ENCODE measurements at regions of chr3 and their contacts with region 1.

Region 1: DNA sequence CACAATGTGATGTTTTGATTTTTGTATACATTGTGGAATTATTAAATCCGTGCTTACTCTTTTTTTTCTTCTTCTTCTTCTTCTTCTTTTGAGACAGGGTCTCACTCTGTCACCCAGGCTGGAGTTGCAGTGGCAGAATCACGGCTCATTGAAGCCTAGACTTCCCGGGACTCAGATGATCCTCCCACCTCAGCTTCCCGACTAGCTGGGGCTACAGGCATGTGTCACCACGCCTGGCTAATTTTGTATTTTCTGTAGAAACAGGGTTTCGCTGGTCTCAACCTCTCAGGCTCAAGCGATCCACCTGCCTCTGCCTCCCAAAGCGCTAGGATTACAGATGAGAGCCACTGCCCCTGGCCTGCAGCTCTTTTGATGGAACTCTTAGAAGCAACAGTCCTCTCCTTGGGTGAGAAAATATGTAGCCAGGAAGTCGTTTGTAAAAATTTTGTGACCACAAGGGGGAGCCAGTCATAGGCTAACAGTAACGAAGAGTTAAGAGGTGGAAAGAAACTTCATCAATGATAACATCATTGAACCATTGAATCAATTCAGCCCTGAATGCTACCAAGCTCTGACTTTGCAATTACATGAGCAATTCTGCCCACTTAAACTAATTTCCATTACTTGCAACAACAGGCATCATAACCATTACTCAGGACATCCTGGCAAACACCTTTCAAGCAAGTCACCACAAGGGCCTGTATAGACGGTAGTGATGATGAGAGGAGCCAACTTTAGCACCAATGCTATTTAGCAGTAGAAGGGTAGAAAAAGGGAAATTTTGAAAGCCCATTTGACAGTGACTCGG is 16.7 kb upstream of the CMTM7 start:
- DNase-seq: peak; percentile 40 to 88 (median 66)
- ATAC-seq: peak; percentile 32
- H3K4me3 ChIP-seq: no peak overlapping the region
- H3K4me3 Mint-ChIP-seq: no peak overlapping the region
- H3K27ac ChIP-seq: no peak overlapping the region
- H3K27ac Mint-ChIP-seq: peak overlapping the region; percentile 18
- H3K4me1 ChIP-seq: peaks cover 31% of the 10 kb centered on the region
- H3K4me1 Mint-ChIP-seq: peaks cover 41% of the 10 kb centered on the region
- H3K27me3 ChIP-seq: no peaks in the 10 kb centered on the region
- H3K27me3 Mint-ChIP-seq: no peaks in the 10 kb centered on the region
- CTCF ChIP-seq: peak; percentile 78

Region 2: DNA sequence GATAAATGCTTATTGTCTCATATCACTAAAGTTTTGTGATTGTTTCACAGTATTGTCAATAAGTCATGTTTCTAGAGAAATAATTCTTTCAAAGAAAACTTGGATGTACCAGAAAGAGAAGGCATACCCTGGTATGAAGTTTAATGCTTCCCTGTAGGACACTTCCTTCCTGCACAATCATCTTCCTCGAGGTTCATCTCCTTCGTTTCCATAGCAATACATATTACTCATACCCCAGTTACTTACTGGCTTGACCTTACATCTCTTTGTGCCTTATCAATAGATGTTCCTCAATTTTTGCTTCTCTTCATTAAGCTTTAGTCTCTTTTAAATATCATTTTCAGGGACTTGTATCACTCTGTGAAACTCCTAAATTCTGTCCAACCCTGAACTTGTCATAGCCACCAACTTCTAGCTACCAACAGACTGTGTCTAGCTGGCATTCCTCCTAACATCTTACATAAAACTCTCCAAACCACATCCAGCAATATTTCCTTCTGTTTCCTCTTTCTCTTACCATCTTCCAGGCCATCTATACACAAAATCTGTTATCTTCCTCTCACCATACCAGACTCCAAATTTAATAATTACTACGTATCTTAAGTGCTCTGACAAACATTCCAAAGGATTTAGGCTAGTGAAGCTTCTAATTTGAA is 1614.8 kb before region 1 on chr3:
- CTCF ChIA-PET with region 1: no interaction called
- POLR2A ChIA-PET with region 1: no interaction called
- intact Hi-C with region 1: no loop called
- DNase-seq: no peak
- ATAC-seq: no peak
- H3K4me3 ChIP-seq: no peak overlapping the region
- H3K4me3 Mint-ChIP-seq: no peak overlapping the region
- H3K27ac ChIP-seq: no peak overlapping the region
- H3K27ac Mint-ChIP-seq: no peak overlapping the region
- H3K4me1 ChIP-seq: no peaks in the 10 kb centered on the region
- H3K4me1 Mint-ChIP-seq: no peaks in the 10 kb centered on the region
- H3K27me3 ChIP-seq: no peaks in the 10 kb centered on the region
- H3K27me3 Mint-ChIP-seq: no peaks in the 10 kb centered on the region
- CTCF ChIP-seq: no peak

Region 3: GRCh38 chr3:31981206-31982181 is 393.5 kb before region 1 on chr3 and contains the starts of genes OSBPL10 and ZNF860:
- CTCF ChIA-PET with region 1: no interaction called
- POLR2A ChIA-PET with region 1: no interaction called
- intact Hi-C with region 1: no loop called
- DNase-seq: peak in 3 of 9 experiments; percentile 6 to 19 (median 17)
- ATAC-seq: peak; percentile 49
- H3K4me3 ChIP-seq: peak within 1 kb of the TSS; percentile 39 to 66
- H3K4me3 Mint-ChIP-seq: peak within 1 kb of the TSS; percentile 84
- H3K27ac ChIP-seq: no peak within 1 kb of the TSS
- H3K27ac Mint-ChIP-seq: no peak within 1 kb of the TSS
- H3K4me1 ChIP-seq: peaks cover 15% of the 10 kb centered on the region
- H3K4me1 Mint-ChIP-seq: peaks cover 15% of the 10 kb centered on the region
- H3K27me3 ChIP-seq: peaks cover 10 to 16% of the 10 kb centered on the region in 2 experiments
- H3K27me3 Mint-ChIP-seq: peaks cover 51% of the 10 kb centered on the region
- CTCF ChIP-seq: no peak
- total RNA-seq, gene OSBPL10: 0.83 to 0.92 TPM
- total RNA-seq, gene ZNF860: not detected

Region 4: GRCh38 chr3:32177702-32178198 is 197.2 kb before region 1 on chr3:
- CTCF ChIA-PET with region 1: interaction called, 10 read pairs
- POLR2A ChIA-PET with region 1: no interaction called
- intact Hi-C with region 1: no loop called
- DNase-seq: peak in 8 of 9 experiments; percentile 19 to 58 (median 34)
- ATAC-seq: peak; percentile 59
- H3K4me3 ChIP-seq: no peak overlapping the region
- H3K4me3 Mint-ChIP-seq: peak overlapping the region; percentile 5
- H3K27ac ChIP-seq: no peak overlapping the region
- H3K27ac Mint-ChIP-seq: no peak overlapping the region
- H3K4me1 ChIP-seq: peaks cover 8% of the 10 kb centered on the region
- H3K4me1 Mint-ChIP-seq: peaks cover 10% of the 10 kb centered on the region
- H3K27me3 ChIP-seq: no peaks in the 10 kb centered on the region
- H3K27me3 Mint-ChIP-seq: peaks cover 4% of the 10 kb centered on the region
- CTCF ChIP-seq: no peak

Region 5: GRCh38 chr3:32334675-32335074 is 40.3 kb before region 1 on chr3:
- CTCF ChIA-PET with region 1: interaction called, 12 read pairs
- POLR2A ChIA-PET with region 1: no interaction called
- intact Hi-C with region 1: no loop called
- DNase-seq: peak in 8 of 9 experiments; percentile 29 to 66 (median 37)
- ATAC-seq: peak; percentile 81
- H3K4me3 ChIP-seq: no peak overlapping the region
- H3K4me3 Mint-ChIP-seq: no peak overlapping the region
- H3K27ac ChIP-seq: no peak overlapping the region
- H3K27ac Mint-ChIP-seq: peak overlapping the region; percentile 89
- H3K4me1 ChIP-seq: peaks cover 18% of the 10 kb centered on the region
- H3K4me1 Mint-ChIP-seq: peaks cover 28% of the 10 kb centered on the region
- H3K27me3 ChIP-seq: no peaks in the 10 kb centered on the region
- H3K27me3 Mint-ChIP-seq: no peaks in the 10 kb centered on the region
- CTCF ChIP-seq: no peak

Region 6: GRCh38 chr3:32359766-32360492 is 15.1 kb before region 1 on chr3:
- CTCF ChIA-PET with region 1: interaction called, 31 read pairs
- POLR2A ChIA-PET with region 1: interaction called, 3 read pairs
- intact Hi-C with region 1: no loop called
- DNase-seq: no peak
- ATAC-seq: no peak
- H3K4me3 ChIP-seq: no peak overlapping the region
- H3K4me3 Mint-ChIP-seq: no peak overlapping the region
- H3K27ac ChIP-seq: no peak overlapping the region
- H3K27ac Mint-ChIP-seq: no peak overlapping the region
- H3K4me1 ChIP-seq: no peaks in the 10 kb centered on the region
- H3K4me1 Mint-ChIP-seq: no peaks in the 10 kb centered on the region
- H3K27me3 ChIP-seq: no peaks in the 10 kb centered on the region
- H3K27me3 Mint-ChIP-seq: no peaks in the 10 kb centered on the region
- CTCF ChIP-seq: no peak

Region 7: GRCh38 chr3:32401556-32402081 is 26.6 kb after region 1 on chr3:
- CTCF ChIA-PET with region 1: interaction called, 33 read pairs
- POLR2A ChIA-PET with region 1: interaction called, 5 read pairs
- intact Hi-C with region 1: loop called (anchors 1 kb)
- DNase-seq: peak in 8 of 9 experiments; percentile 50 to 81 (median 70)
- ATAC-seq: peak; percentile 73
- H3K4me3 ChIP-seq: peak overlapping the region; percentile 53 to 66
- H3K4me3 Mint-ChIP-seq: peak overlapping the region; percentile 86
- H3K27ac ChIP-seq: peak overlapping the region; percentile 81 to 83
- H3K27ac Mint-ChIP-seq: peak overlapping the region; percentile 99
- H3K4me1 ChIP-seq: peaks cover 46% of the 10 kb centered on the region
- H3K4me1 Mint-ChIP-seq: peaks cover 78% of the 10 kb centered on the region
- H3K27me3 ChIP-seq: no peaks in the 10 kb centered on the region
- H3K27me3 Mint-ChIP-seq: no peaks in the 10 kb centered on the region
- CTCF ChIP-seq: no peak

Region 8: DNA sequence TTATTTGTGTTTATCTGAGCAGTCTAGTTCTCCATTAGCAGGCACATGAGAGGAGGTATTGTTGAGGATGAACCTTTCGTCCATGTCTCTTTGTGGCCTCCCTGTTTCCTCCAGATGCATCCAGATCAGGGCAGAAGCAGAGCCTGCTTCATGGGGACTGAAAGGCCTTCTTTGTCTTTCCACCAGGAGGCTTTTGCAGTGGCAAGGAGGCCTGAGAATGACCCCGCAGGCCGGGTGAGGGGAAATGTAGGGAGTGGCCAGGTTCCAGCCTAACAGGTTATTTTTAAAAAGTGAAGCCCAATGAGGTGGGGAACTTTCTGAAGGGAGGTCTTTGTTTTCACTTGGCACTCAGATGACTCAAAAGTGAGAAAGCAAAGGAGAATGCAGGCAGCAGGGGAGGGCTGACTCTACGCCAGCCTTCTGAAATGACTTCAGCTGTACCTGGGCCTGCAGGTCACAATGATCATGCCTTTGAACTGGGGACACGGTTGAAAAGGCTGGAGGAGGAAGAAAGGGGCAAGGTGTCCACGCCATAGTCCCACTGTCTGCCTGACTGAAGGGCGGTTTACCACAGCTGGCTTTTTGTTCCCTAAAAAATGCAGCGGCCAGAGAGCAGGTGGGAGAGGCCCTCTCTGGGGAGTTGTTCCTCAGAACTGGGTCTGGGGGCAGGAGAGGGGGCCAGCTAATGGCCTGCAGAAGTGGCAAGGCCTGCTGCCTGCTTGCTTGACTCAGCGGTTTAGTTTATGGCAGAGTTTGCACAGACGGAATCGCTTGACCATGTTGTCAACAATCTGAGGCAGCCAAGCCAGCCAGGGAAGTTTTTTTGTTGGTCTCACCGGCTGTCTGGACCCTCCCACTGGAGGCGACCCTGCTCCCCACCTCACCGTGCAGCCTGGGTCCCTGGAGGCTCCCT is 45.4 kb after region 1 on chr3:
- CTCF ChIA-PET with region 1: interaction called, 26 read pairs
- POLR2A ChIA-PET with region 1: interaction called, 6 read pairs
- intact Hi-C with region 1: no loop called
- DNase-seq: peak in 4 of 9 experiments; percentile 30 to 59 (median 49)
- ATAC-seq: peak; percentile 60
- H3K4me3 ChIP-seq: peak overlapping the region in 1 of 2 experiments; percentile 0
- H3K4me3 Mint-ChIP-seq: peak overlapping the region; percentile 73
- H3K27ac ChIP-seq: peak overlapping the region; percentile 15 to 54
- H3K27ac Mint-ChIP-seq: peak overlapping the region; percentile 98
- H3K4me1 ChIP-seq: peaks cover 91% of the 10 kb centered on the region
- H3K4me1 Mint-ChIP-seq: peaks cover 93% of the 10 kb centered on the region
- H3K27me3 ChIP-seq: no peaks in the 10 kb centered on the region
- H3K27me3 Mint-ChIP-seq: no peaks in the 10 kb centered on the region
- CTCF ChIP-seq: no peak

Region 9: DNA sequence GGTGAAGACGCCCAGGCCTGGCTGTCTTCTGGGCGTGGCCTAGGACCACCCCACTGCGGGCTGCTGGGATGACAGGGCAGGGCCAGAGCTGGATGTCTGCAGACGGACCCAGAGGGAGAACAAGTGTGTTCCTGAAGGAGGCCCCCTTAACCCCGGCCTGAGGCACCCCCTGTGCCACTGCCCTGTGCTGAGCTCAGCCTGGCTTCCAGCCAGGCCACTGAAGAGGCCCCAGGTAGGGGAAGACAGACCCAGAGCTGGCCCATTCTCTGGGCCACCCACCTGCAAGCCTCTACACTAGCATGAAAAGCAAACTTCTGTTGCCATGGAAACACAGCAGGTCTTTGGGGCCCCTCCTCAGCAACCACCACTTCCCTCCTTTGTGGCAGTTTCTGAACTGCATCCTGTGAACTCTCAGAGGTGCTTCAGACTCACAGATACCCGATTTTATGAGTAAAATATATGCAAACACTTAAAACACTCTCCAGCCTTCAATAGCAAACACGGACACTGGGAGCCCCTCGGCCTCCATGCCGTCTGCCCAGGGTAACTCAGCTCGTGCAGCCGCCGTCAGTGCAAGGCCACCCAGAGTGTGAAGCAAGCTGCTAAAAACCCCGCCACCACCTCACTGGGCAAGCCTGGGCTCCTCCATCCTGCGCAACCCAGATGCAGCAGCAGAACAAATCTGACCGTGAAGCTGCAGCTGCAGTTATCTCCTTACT is 85.2 kb after region 1 on chr3:
- CTCF ChIA-PET with region 1: interaction called, 22 read pairs
- POLR2A ChIA-PET with region 1: interaction called, 8 read pairs
- intact Hi-C with region 1: no loop called
- DNase-seq: peak; percentile 57 to 97 (median 80)
- ATAC-seq: peak; percentile 72
- H3K4me3 ChIP-seq: peak overlapping the region; percentile 34 to 37
- H3K4me3 Mint-ChIP-seq: peak overlapping the region; percentile 81
- H3K27ac ChIP-seq: peak overlapping the region; percentile 90 to 95
- H3K27ac Mint-ChIP-seq: no peak overlapping the region
- H3K4me1 ChIP-seq: peaks cover 79% of the 10 kb centered on the region
- H3K4me1 Mint-ChIP-seq: peaks cover 38% of the 10 kb centered on the region
- H3K27me3 ChIP-seq: no peaks in the 10 kb centered on the region
- H3K27me3 Mint-ChIP-seq: no peaks in the 10 kb centered on the region
- CTCF ChIP-seq: no peak

Measured in CD8-positive, alpha-beta T cell (primary cell).